RWPE1 (cell line): ENCODE measurements at regions of chr1 and their contacts with region 1.

Region 1: GRCh38 chr1:200979574-200980451 is 43.7 kb downstream of the KIF21B start:
- DNase-seq: peak; percentile 66
- H3K27ac ChIP-seq: no peak overlapping the region
- CTCF ChIP-seq: peak; percentile 53

Region 2: GRCh38 chr1:201042779-201043461 is 63.1 kb after region 1 on chr1:
- CTCF ChIA-PET with region 1: interaction called, 12 read pairs
- POLR2A ChIA-PET with region 1: no interaction called
- DNase-seq: peak; percentile 80
- H3K27ac ChIP-seq: no peak overlapping the region
- CTCF ChIP-seq: peak; percentile 69